Mammary epithelial cell (primary cell): ENCODE measurements at regions of chr1 and their contacts with region 1.

Region 1: GRCh38 chr1:2194898-2195673 is 514 bp upstream of the FAAP20 start:
- DNase-seq: peak; percentile 85
- H3K4me3 ChIP-seq: peak overlapping the region; percentile 33 to 81 (median 56)
- H3K27ac ChIP-seq: peak overlapping the region; percentile 45
- H3K4me1 ChIP-seq: peaks cover 37% of the 10 kb centered on the region
- H3K27me3 ChIP-seq: no peaks in the 10 kb centered on the region
- CTCF ChIP-seq: peak; percentile 70 to 97

Region 2: GRCh38 chr1:1842360-1843146 is 352.5 kb before region 1 on chr1:
- CTCF ChIA-PET with region 1: no interaction called
- dilution Hi-C with region 1: no loop called
- in situ Hi-C with region 1: no loop called
- intact Hi-C with region 1: no loop called
- DNase-seq: no peak
- H3K4me3 ChIP-seq: no peak overlapping the region
- H3K27ac ChIP-seq: no peak overlapping the region
- H3K4me1 ChIP-seq: no peaks in the 10 kb centered on the region
- H3K27me3 ChIP-seq: no peaks in the 10 kb centered on the region
- CTCF ChIP-seq: no peak

Region 3: DNA sequence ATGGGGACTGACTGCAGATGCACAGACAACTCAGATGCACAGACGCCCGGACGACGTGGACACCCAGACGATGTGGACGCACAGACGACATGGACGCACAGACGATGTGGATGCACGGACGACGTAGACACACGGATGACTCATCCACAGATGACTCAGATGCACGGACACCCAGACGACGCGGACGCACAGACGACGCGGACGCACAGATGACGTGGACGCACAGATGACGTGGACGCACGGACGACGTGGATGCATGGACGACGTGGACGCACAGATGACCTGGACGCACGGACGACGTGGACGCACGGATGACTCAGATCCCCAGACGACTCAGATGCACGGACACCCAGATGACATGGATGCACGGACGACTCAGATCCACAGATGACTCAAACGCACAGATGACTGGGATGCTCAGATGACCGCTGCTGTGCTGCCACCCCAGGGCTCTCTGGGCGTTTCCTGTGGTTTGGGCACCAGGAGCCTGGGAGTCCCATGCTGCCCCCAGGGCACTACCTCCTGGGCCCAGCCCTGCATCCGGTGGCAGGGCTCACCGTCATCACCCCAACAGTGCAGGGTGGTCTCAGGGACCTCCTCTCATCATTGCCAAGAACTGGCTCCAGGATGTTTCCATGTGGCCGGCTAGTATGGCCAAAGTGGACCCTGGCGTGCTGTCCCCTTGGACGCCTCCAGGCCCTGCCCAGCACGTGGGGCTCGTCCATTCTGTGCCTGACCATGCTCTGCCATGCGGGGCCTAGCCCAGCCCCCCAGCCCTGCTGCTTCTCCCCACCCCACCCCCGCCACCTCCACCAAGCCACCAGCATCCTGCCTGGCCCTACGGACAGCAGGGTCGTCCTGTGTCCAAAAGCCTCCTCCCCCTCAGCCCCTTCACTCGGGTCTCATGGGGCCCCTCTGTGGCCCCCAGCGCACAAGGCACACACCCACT is 14.5 kb before region 1 on chr1:
- CTCF ChIA-PET with region 1: no interaction called
- dilution Hi-C with region 1: no loop called
- in situ Hi-C with region 1: no loop called
- intact Hi-C with region 1: no loop called
- DNase-seq: peak; percentile 29
- H3K4me3 ChIP-seq: no peak overlapping the region
- H3K27ac ChIP-seq: no peak overlapping the region
- H3K4me1 ChIP-seq: no peaks in the 10 kb centered on the region
- H3K27me3 ChIP-seq: no peaks in the 10 kb centered on the region
- CTCF ChIP-seq: no peak

Region 4: GRCh38 chr1:2229037-2229864 is 34.2 kb after region 1 on chr1:
- CTCF ChIA-PET with region 1: no interaction called
- dilution Hi-C with region 1: no loop called
- in situ Hi-C with region 1: no loop called
- intact Hi-C with region 1: loop called (anchors 1 kb)
- DNase-seq: peak; percentile 53
- H3K4me3 ChIP-seq: peak overlapping the region; percentile 57 to 81 (median 68)
- H3K27ac ChIP-seq: peak overlapping the region; percentile 61
- H3K4me1 ChIP-seq: peaks cover 39% of the 10 kb centered on the region
- H3K27me3 ChIP-seq: no peaks in the 10 kb centered on the region
- CTCF ChIP-seq: no peak

Region 5: DNA sequence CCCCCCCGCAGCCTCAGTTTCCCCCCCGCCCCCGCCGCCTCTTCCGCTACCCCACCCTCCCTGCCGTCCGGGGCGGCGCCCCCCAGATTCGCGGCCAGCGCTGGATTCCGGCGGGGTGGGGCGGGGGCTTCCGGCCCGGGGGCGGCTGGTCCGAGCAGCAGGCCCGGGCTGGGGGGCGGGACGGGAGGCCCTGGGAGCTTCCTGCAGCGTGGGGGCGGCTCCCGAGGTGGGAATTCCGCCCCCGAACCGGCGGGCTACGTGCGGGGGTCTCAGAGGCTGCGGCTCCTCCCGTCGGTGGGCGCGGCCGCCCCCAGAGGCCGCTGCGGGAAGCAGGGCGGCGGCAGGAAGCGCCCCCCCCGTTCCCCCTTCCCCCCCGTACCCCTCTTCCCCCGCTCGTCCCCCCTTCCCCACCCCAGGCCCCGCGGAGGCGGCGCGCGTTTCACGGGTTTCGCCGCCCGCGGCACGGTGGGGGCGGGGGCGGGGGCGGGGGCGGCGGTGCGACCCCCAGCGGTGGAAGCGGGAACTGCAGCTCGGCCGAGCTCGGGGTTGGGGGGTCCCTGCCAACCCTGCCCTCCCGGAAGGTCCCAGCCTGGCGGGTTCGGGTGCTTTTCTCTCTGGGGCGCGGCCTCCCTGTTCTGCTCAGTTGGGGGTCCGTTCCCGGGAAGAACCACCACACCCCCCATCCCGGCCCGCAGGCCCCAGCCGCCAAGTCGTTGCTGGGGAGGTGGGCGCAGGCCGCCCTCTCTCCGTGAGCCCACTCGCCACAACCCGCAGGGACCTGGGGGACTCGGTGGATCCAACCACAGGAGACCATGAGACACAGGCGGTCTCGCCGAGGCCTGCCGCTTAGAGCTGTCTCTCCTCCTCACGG is 120.0 kb after region 1 on chr1:
- CTCF ChIA-PET with region 1: interaction called, 14 read pairs
- dilution Hi-C with region 1: no loop called
- in situ Hi-C with region 1: no loop called
- intact Hi-C with region 1: loop called (anchors 5 kb)
- DNase-seq: no peak
- H3K4me3 ChIP-seq: peak overlapping the region in 2 of 3 experiments; percentile 38 to 49
- H3K27ac ChIP-seq: no peak overlapping the region
- H3K4me1 ChIP-seq: peaks cover 15% of the 10 kb centered on the region
- H3K27me3 ChIP-seq: no peaks in the 10 kb centered on the region
- CTCF ChIP-seq: peak; percentile 21 to 58

Region 6: GRCh38 chr1:2381741-2382620 is 186.9 kb after region 1 on chr1:
- CTCF ChIA-PET with region 1: interaction called, 26 read pairs
- dilution Hi-C with region 1: no loop called
- in situ Hi-C with region 1: loop called (anchors 5 kb)
- intact Hi-C with region 1: loop called (anchors 1 kb)
- DNase-seq: peak; percentile 55
- H3K4me3 ChIP-seq: no peak overlapping the region
- H3K27ac ChIP-seq: no peak overlapping the region
- H3K4me1 ChIP-seq: no peaks in the 10 kb centered on the region
- H3K27me3 ChIP-seq: no peaks in the 10 kb centered on the region
- CTCF ChIP-seq: peak; percentile 69 to 95

Region 7: DNA sequence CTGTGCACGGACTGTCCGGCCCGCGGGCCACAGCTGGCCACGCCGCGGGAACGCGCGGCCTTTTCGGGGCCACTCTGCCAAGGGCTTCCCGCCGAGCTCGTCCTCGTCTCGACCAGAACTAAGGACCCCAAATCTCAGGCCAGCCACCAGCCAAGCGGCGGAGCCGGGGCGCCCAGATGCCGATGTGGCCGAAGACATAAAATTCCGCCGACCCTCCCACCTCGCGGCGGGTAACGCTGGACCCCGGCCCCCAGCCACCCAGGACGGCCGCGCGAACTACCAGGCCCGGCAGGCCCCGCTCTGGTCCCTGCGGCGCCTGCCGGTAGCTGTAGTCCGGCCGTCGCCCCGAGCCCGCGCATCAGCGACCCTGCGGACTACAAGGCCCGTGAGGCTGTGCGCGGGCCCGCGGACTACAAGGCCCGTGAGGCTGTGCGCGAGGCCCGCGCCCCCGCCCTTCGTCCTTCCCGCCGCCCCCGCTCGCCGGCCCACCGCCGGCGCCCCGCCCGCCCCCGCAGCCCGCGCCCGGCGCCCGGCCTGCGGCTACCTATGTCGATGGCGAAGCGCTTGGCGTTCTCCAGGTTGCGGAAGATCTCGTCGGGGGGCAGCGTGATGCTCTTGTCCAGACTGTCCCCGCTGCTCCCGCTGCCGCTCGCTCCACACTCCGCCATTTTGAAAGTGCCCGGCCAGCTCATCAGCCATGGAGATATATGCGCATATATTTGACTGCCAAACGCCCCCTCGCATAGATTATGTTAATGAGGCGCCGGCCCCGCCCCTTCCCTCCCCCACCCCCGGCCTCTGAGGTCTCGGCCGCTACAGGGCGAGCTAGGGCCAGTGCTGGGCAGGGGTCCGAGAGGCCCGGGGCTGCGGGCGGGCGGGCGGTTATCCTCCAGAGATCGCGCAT is 331.1 kb after region 1 on chr1 and contains the start of gene PANK4:
- CTCF ChIA-PET with region 1: no interaction called
- dilution Hi-C with region 1: no loop called
- in situ Hi-C with region 1: loop called in 1 of 2 experiments (anchors 25 kb)
- intact Hi-C with region 1: no loop called
- DNase-seq: peak; percentile 90
- H3K4me3 ChIP-seq: peak within 1 kb of the TSS; percentile 70 to 98 (median 94)
- H3K27ac ChIP-seq: peak within 1 kb of the TSS; percentile 65
- H3K4me1 ChIP-seq: peaks cover 43% of the 10 kb centered on the region
- H3K27me3 ChIP-seq: peaks cover 4% of the 10 kb centered on the region
- CTCF ChIP-seq: no peak
- total RNA-seq, gene PANK4: 14.2 to 28.5 TPM

Region 8: DNA sequence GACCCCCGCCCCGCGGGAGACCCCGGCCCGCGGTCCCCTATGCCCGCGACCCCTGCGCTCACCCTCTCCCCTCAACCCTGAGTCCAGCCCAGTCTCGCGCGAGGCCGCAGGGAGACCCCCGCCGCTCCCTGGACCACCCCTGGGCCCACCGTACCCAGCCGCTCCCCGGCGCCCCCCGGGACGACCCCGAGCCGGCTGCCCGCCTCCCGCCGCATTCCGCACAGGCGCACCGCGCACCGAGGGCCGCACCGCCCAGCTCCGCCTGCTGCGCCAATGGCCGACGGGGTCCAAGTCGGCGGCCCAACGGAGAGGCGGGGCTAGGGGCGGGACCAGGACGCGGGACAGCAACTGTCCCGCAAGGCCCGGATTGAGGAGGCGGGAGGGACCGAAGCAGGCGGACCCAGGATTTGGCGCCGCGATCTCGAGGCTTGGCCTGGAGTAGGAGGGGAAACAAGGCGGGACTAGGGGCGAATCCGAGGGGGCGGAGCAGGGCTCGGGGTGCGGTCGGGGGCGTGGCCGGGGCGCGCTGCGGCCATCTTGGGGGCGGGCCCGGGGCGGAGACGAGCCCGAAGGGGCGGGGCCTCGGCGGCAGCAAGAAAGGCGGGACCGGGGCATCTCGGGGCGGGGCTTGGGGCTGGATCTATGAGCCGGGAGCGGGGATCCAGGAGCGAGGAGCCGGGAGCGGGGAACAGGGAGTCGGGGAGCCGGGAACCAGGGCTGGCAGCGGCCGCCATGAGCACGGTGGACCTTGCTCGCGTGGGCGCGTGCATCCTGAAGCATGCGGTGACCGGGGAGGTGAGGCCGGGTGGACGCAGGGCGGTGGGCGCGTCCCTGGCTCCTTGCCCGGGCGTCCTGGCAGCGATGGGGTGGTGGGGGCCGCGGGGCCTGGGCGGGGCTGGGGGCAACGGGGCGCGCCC is 391.3 kb after region 1 on chr1 and contains the start of gene PRXL2B:
- CTCF ChIA-PET with region 1: no interaction called
- dilution Hi-C with region 1: loop called (anchors 10 kb)
- in situ Hi-C with region 1: no loop called
- intact Hi-C with region 1: no loop called
- DNase-seq: peak; percentile 99
- H3K4me3 ChIP-seq: peak within 1 kb of the TSS; percentile 75 to 91 (median 78)
- H3K27ac ChIP-seq: peak within 1 kb of the TSS; percentile 35
- H3K4me1 ChIP-seq: peaks cover 11% of the 10 kb centered on the region
- H3K27me3 ChIP-seq: no peaks in the 10 kb centered on the region
- CTCF ChIP-seq: no peak
- total RNA-seq, gene PRXL2B: 15.7 to 29.1 TPM

Region 9: GRCh38 chr1:3431266-3431665 is 1236.2 kb after region 1 on chr1:
- CTCF ChIA-PET with region 1: no interaction called
- dilution Hi-C with region 1: no loop called
- in situ Hi-C with region 1: loop called in 1 of 2 experiments (anchors 25 kb)
- intact Hi-C with region 1: no loop called
- DNase-seq: no peak
- H3K4me3 ChIP-seq: no peak overlapping the region
- H3K27ac ChIP-seq: no peak overlapping the region
- H3K4me1 ChIP-seq: no peaks in the 10 kb centered on the region
- H3K27me3 ChIP-seq: peaks cover 3% of the 10 kb centered on the region
- CTCF ChIP-seq: peak in 1 of 2 donors; percentile 14